Astrocyte of the cerebellum (primary cell): ENCODE measurements at regions of chr17 and their contacts with region 1.

Region 1: DNA sequence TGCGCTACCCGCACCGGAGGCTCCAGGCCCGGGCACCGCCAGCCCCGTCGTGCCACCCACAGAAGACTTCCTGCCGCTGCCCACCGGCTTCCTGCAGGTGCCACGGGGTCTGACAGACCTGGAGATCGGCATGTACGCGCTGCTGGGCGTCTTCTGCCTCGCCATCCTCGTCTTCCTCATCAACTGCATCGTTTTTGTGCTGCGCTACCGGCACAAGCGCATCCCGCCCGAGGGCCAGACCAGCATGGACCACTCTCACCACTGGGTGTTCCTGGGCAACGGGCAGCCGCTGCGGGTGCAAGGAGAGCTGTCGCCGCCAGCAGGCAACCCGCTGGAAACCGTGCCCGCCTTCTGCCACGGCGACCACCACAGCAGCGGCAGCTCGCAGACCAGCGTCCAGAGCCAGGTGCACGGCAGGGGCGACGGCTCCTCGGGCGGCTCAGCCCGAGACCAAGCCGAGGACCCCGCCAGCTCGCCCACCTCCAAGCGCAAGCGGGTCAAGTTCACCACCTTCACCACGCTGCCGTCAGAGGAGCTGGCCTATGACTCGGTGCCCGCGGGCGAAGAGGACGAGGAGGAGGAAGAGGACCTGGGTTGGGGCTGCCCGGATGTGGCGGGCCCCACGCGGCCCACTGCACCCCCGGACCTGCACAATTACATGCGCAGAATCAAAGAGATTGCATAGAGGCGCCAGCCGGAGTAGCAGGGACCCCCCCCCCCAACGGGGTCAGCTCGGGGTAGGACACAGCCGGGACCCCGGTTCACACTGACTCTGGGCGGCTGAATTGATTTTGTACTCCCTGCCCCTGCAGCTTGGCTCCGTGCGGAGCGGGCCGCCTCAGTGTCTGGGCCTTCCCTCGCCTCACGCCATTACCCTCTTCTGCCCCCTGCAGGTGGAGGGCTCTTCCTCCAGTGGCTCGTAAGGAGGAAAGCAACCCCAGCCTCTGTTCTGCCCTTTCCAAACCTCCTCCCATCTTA is 58.5 kb downstream of the TMEM132E start:
- DNase-seq: peak; percentile 19
- H3K4me3 ChIP-seq: peak overlapping the region; percentile 9
- CTCF ChIP-seq: peak; percentile 81

Region 2: GRCh38 chr17:34434052-34434451 is 203.8 kb before region 1 on chr17:
- in situ Hi-C with region 1: loop called (anchors 10 kb)
- DNase-seq: no peak
- H3K4me3 ChIP-seq: no peak overlapping the region
- CTCF ChIP-seq: no peak

Region 3: GRCh38 chr17:34503528-34504145 is 134.2 kb before region 1 on chr17:
- in situ Hi-C with region 1: no loop called
- DNase-seq: no peak
- H3K4me3 ChIP-seq: no peak overlapping the region
- CTCF ChIP-seq: no peak

Region 4: GRCh38 chr17:34542700-34543336 is 95.0 kb before region 1 on chr17:
- in situ Hi-C with region 1: loop called (anchors 5 kb)
- DNase-seq: no peak
- H3K4me3 ChIP-seq: no peak overlapping the region
- CTCF ChIP-seq: peak; percentile 77

Region 5: GRCh38 chr17:34556384-34556783 is 81.5 kb before region 1 on chr17:
- in situ Hi-C with region 1: no loop called
- DNase-seq: peak; percentile 1
- H3K4me3 ChIP-seq: no peak overlapping the region
- CTCF ChIP-seq: no peak

Region 6: GRCh38 chr17:34571428-34572130 is 66.3 kb before region 1 on chr17:
- in situ Hi-C with region 1: loop called (anchors 5 kb)
- DNase-seq: no peak
- H3K4me3 ChIP-seq: no peak overlapping the region
- CTCF ChIP-seq: no peak

Region 7: GRCh38 chr17:34673995-34674870 is 36.4 kb after region 1 on chr17:
- in situ Hi-C with region 1: no loop called
- DNase-seq: no peak
- H3K4me3 ChIP-seq: no peak overlapping the region
- CTCF ChIP-seq: no peak

Region 8: GRCh38 chr17:34721326-34721725 is 83.5 kb after region 1 on chr17:
- in situ Hi-C with region 1: loop called (anchors 25 kb)
- DNase-seq: no peak
- H3K4me3 ChIP-seq: no peak overlapping the region
- CTCF ChIP-seq: no peak

Region 9: DNA sequence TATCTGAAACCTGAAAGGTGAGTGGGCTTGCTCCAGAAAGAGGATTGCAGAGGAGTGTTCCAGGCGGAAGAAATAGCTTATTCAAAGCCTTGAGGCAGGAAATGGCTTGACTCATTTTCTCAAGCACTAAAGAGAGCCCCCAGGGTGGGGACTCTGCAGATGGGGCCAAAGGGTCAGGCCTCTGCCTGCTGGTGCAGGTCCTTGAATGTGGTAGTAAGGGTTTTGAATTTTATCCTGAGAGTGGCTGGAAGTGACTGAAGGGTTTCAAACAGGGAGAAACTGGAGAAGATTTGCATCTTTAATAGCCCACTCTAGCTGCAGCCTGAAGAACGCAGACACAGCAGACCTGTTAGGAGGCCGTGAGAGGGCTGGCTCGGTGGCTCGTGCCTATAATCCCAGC is 179.0 kb after region 1 on chr17:
- in situ Hi-C with region 1: loop called (anchors 10 kb)
- DNase-seq: no peak
- H3K4me3 ChIP-seq: no peak overlapping the region
- CTCF ChIP-seq: no peak

Region 10: DNA sequence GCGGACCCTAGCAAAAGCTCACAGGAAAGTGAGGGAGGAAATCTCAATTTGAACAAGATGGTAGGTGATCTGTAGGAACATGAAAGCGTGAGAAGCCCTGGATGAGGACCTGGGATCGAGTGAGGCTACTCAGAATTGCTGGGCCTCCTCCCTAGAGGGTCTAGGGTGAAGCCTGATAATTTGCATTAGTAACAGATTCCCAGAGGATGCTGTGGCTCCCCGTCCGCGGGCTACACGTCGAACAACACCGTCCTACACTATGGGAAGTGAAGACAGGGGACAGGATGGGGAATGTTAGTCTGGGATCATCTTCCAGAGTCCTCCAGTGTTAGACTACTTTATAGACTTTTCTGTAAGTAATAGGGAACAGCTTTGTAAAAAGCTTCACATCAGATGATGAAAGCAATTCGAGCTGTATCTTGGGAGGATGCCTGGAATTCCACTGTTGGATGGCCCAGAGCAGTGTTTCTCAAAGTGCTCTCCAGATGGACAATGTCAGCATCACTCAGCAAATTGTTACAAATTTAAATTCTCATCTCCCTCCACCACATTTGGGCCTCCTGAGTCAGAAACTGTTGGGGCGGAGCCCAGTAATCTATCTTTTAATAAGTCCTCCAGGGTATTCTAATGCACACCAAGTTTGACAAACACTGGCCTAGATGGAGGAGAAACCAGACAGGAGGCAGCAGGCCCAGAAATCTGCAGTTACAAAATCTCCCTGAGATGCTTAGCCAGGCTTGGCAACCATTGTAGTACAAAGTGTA is 490.1 kb after region 1 on chr17:
- in situ Hi-C with region 1: loop called (anchors 5 kb)
- DNase-seq: no peak
- H3K4me3 ChIP-seq: no peak overlapping the region
- CTCF ChIP-seq: no peak